ENCODE measurements at regions of chr5 and their contacts with region 1.

Region 1: DNA sequence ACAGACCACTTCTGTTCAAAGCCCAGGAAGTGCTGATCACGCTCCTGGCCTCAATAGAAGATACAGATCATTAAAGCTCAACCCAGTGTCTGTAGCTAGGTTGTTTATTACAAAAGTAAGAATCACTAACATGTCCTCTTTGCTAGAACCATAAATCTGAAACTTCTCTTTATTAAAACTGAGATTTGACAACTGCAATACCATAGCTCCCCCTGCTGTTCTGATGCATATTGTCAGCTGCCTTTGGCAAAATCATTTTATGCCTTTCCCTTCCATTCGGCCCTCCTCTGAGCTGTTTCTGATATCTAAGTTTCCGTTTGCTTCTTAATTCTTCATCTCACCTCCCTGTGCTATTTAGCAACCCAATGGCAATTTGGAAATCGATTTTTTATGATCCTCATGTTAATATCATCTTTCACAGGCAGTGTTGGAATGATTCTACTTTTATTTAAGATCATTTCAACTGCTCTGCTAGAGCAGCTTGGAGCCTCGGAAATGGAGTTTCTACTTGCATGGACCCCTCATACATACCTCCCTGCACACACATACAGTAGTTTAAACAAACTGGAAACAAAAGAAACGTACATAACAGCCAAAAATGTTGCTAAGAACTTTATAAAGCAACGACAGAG is 998.8 kb downstream of the MAT2B start:
- DNase-seq: peak in 4 of 10 donors; percentile 21 to 44 (median 35)

Region 2: GRCh38 chr5:163564321-163564938 is 939.8 kb before region 1 on chr5:
- intact Hi-C with region 1: loop called (anchors 2 kb)
- DNase-seq: peak in 7 of 10 donors; percentile 35 to 88 (median 68)

Region 3: GRCh38 chr5:163695830-163696578 is 808.3 kb before region 1 on chr5:
- intact Hi-C with region 1: loop called (anchors 5 kb)
- DNase-seq: peak; percentile 19 to 88 (median 37)

Region 4: DNA sequence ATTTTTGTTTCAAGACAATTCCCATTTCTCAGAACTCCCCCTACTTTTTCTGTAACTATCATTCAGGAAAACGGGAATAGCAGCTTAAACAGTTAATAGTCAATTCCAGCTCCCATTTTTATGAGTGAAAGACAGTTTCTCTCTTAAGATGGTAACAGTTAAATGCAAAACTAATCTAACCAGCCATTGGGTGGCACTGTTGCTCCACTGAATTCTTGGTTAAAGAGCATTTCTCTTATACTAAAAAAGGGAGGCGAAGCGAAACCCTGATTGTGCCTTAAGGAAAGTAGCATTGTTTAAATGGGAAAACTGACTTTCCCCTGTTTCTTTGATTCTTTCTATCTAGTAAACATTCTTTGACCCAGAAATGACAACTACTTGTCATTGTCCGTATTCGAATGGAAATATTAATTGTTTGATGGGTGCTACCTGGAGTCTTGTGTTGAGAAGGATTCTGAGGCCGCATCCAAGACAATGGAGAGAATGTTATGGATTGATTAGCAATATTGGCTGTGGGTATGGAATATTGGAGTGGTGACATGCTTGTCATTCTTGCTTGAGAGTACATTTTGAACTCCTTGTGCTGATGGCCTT is 491.1 kb before region 1 on chr5:
- intact Hi-C with region 1: loop called (anchors 1 kb)
- DNase-seq: peak in 5 of 10 donors; percentile 8 to 53 (median 34)